Prostate gland (tissue), 2 donors: ENCODE measurements at regions of chr4 and their contacts with region 1.

Region 1: DNA sequence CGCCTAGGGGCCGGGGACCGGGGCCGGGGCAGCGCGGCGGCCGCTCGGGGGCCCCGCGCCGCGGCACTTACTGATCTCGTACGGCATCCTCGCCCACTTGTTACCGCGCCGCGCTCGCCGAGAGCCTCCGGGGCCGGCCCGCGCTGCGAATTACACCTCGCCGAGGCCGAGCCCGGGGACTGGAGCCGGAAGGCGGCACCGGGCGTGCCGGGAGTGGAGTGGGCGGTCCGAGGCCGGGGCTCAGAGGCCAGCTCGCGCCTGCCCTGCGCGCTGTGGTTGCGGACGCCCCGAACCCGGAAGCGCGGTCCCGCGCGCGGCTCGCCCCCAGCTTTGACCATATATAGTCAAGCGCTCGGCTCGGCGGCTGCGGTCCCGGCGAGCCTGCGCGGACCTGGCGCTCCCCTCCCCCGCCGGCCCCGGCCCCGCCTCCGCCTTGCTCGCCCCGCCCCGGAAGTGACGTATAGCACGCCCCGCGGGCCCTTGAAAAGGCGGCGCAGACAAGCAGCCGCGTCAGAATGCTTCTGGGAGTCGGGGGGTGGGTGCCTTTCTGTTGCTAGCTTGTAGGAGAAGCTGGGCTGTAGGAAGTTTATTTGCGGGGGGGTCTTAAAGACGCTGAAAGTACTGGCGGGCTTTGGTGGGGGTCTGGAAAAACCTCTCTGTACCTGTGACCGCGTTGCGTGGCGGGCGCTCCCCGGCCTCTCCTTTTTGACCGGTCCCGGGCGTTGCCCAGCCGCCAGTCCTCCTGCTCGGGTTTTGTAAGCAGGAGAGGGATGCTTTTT is at the start of gene WDR1:
- DNase-seq: peak; percentile 95
- H3K4me3 ChIP-seq: peak within 1 kb of the TSS; percentile 76 to 78
- H3K27ac ChIP-seq: peak within 1 kb of the TSS; percentile 92
- H3K4me1 ChIP-seq: peaks cover 15% of the 10 kb centered on the region
- H3K27me3 ChIP-seq: no peaks in the 10 kb centered on the region
- CTCF ChIP-seq: no peak
- POLR2A ChIP-seq: peak; percentile 93
- total RNA-seq, gene WDR1: 127 to 171 TPM

Region 2: DNA sequence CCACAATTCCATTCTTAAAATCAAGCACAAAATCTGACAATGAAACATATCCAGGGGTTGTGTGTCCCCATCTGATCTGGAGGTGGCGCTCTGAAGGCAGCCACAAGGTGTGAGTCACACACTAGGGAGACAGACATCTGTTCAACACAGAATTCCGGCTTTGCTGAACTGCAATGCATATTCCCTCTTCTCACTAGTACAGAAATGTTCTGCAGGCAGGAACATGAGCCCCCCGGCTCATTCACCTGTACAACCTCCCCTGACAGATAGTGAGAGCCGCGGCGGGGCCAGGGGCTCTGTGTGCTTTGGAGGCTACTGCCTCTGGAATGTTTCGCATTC is 42.0 kb before region 1 on chr4:
- intact Hi-C with region 1: loop called (anchors 5 kb)
- DNase-seq: no peak
- H3K4me3 ChIP-seq: no peak overlapping the region
- H3K27ac ChIP-seq: no peak overlapping the region
- H3K4me1 ChIP-seq: no peaks in the 10 kb centered on the region
- H3K27me3 ChIP-seq: no peaks in the 10 kb centered on the region
- CTCF ChIP-seq: peak in 1 of 4 experiments; percentile 14
- POLR2A ChIP-seq: no peak

Region 3: GRCh38 chr4:10151182-10151581 is 34.4 kb after region 1 on chr4:
- intact Hi-C with region 1: no loop called
- DNase-seq: no peak
- H3K4me3 ChIP-seq: no peak overlapping the region
- H3K27ac ChIP-seq: no peak overlapping the region
- H3K4me1 ChIP-seq: no peaks in the 10 kb centered on the region
- H3K27me3 ChIP-seq: no peaks in the 10 kb centered on the region
- CTCF ChIP-seq: no peak
- POLR2A ChIP-seq: no peak